SK-N-SH (cell line): ENCODE measurements at regions of chr10 and their contacts with region 1.

Region 1: DNA sequence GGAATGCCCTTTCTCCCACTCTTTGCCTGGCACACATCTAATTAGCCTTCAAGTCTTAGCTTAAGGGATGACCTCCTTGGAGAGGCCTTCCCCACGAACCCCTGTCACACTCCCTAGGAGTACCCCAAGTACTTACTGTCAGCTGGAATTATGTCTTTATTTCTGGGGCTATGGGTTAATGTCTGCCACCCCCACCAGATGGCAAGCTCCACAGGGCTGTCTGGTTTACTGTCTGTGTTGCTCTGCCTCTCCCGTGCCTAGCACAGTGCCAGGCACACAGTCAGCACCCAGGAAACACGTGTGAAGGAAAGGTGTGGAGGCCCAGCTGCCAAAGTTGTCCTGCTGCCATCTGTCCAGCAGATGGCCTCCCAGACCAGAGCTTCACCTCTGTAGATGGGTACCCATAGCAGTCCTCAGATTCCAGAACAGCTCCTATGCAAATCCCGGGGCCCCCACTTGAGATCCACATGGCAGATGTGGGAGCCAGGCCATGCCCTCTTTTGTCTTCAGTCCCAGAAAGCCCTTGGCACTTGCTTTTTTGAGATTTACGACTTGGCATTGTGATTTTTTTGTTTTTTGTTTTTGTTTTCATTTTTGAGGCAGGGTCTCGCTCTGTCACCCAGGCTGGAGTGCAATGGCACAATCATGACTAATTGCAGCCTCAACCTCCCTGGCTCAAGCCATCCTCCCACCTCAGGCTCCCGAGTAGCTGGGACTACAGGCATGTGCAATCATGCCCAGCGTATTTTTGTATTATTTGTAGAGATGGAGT is 17.2 kb upstream of the PALD1 start:
- DNase-seq: peak; percentile 85
- H3K4me3 ChIP-seq: no peak overlapping the region; a peak in 1 of 4 replicates
- H3K27ac ChIP-seq: no peak overlapping the region
- H3K4me1 ChIP-seq: peaks cover 0 to 24% of the 10 kb centered on the region in 2 experiments; a peak in 1 of 4 replicates
- H3K27me3 ChIP-seq: peaks cover 8% of the 10 kb centered on the region; the same call in 1 of the 2 replicates
- CTCF ChIP-seq: peak; percentile 82
- EP300 ChIP-seq: no peak
- RAD21 ChIP-seq: peak; percentile 94

Region 2: DNA sequence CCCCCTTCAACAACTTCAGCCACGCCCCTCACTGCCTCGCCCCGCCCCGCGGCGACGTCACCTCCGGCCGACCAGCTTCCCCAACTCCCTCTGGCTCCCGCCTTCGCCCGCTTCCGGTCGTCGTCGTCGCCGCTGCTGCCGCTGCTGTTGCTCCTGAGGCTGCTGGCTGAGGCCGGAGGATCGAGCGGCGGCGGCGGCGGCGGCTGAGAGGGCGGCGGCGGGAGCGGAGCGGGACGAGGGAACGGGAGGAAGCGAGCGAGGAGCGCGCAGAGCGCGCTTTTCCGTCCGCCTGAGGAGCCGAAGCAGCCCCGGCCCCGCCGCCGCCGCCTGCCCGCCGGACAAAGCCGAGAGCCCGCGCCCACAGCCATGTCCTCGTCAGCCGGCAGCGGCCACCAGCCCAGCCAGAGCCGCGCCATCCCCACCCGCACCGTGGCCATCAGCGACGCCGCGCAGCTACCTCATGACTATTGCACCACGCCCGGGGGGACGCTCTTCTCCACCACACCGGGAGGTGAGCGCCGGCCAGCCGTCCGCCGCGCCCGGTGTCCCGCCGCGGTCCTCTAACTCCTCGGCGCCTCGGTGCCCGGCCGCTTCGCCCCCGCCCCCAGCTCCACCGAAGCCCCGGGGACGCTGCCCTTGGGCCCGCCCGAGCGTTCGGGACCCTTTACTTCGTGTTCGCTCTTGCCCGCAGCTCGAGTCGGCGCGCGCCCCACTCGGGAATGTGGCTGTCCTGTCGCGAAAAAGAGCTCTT is 57.2 kb before region 1 on chr10 and contains the start of gene EIF4EBP2:
- CTCF ChIA-PET with region 1: interaction called, 12 read pairs
- POLR2A ChIA-PET with region 1: no interaction called
- DNase-seq: peak; percentile 96
- H3K4me3 ChIP-seq: peak within 1 kb of the TSS; percentile 91 to 93
- H3K27ac ChIP-seq: peak within 1 kb of the TSS; percentile 74
- H3K4me1 ChIP-seq: peaks cover 10 to 18% of the 10 kb centered on the region in 2 experiments
- H3K27me3 ChIP-seq: no peaks in the 10 kb centered on the region
- CTCF ChIP-seq: no peak
- EP300 ChIP-seq: no peak
- RAD21 ChIP-seq: no peak
- polyA plus RNA-seq, gene EIF4EBP2: 9.9 and 12.7 TPM in 2 replicates

Region 3: DNA sequence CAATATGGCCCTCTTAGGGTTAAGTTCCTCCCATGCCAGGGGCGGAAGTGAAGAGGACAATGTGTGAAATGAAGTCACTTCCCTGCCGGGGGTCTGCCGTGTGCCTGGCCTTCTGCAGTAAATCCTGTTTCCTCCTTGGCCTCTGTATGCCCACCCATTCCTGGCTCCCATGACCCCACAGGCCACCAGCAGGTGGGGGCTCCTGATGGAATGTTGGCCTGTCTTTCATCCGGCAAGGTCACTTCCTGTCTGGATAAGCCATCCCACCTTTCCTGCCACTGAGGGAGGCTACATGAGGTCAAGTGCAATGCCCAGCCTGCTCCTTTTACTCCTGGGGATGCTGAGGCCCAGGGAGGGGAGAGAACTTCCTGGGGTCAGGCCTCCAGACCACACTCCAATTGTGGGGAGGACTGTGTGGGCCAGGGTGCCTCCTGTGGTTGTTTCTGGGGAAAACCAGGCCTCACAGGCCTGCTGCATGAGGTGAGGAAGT is 39.5 kb after region 1 on chr10:
- CTCF ChIA-PET with region 1: interaction called, 11 read pairs
- POLR2A ChIA-PET with region 1: no interaction called
- DNase-seq: no peak
- H3K4me3 ChIP-seq: no peak overlapping the region
- H3K27ac ChIP-seq: no peak overlapping the region
- H3K4me1 ChIP-seq: peaks cover 0 to 14% of the 10 kb centered on the region in 2 experiments; a peak in 1 of 4 replicates
- H3K27me3 ChIP-seq: no peaks in the 10 kb centered on the region
- CTCF ChIP-seq: no peak
- EP300 ChIP-seq: no peak
- RAD21 ChIP-seq: no peak

Region 4: DNA sequence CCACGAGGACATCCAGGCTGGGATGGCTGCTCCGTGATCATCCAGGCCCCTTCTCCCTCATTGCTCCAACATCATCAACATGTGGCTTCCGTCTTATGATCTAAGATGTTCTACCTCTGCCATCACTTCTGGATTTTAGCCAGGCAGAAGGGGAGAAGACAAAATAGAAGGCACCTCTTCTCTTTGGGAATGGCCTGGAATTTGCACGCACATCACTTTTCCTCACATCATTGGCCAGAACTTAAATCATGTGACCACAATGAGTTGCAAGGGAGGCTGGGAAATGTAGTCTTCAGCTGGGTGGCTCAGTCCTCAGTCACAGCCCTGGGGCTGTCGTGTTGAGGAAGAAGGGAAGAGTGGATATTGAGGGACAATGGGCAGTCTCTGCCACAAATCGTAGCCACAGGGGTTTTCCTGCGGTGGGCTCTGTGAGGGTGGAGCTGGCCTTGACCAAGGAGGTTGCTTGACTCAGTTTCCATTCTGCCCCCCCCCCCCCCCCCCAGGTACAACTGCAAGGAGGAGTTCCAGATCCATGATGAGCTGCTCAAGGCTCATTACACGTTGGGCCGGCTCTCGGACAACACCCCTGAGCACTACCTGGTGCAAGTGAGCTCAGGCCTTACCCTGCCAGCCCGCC is 67.4 kb after region 1 on chr10:
- CTCF ChIA-PET with region 1: interaction called, 190 read pairs
- POLR2A ChIA-PET with region 1: no interaction called
- DNase-seq: peak; percentile 79
- H3K4me3 ChIP-seq: no peak overlapping the region
- H3K27ac ChIP-seq: no peak overlapping the region
- H3K4me1 ChIP-seq: peaks cover 0 to 3% of the 10 kb centered on the region in 2 experiments; a peak in 1 of 4 replicates
- H3K27me3 ChIP-seq: no peaks in the 10 kb centered on the region
- CTCF ChIP-seq: no peak
- EP300 ChIP-seq: no peak
- RAD21 ChIP-seq: no peak

Region 5: DNA sequence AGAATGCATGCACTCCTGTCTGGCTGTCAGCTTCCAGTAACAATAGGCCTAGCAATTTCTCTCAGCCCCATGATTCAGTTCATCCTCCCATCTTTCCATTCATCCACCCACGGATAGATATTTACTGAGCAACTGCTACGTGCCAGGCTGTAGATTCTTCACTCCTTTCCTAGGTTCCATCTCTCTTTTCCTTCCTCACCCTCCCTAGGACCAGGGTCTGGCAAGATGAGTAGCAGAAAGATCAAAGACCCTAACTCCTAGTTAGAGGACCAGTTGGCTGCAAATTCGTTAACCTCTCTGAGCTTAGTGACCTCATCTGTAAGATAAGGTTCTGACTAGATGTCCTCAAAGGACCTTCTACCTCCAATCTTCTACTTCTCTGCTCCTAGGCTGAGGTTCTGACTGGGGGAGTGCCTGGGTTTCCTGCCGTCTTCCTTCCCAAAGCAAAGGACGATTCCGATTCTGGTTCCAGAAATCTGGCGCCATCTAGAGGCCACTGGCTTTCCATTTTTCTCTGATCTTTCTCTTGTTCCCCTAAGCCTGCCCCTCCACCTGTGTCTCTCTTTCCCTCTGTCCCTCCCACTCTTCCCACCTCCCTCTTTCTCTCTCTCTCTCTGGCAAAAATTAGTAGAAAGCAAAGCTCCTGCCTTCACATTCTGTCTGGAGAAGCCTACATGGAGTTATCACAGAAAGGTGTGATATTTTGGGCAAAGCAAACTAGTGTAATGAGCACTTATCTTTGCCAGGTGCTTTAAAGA is 297.5 kb after region 1 on chr10:
- CTCF ChIA-PET with region 1: interaction called, 18 read pairs
- POLR2A ChIA-PET with region 1: no interaction called
- DNase-seq: peak; percentile 81
- H3K4me3 ChIP-seq: no peak overlapping the region
- H3K27ac ChIP-seq: peak overlapping the region in 1 of 2 experiments; percentile 25; a peak in 1 of 4 replicates
- H3K4me1 ChIP-seq: peaks cover 0 to 17% of the 10 kb centered on the region in 2 experiments; a peak in 1 of 4 replicates
- H3K27me3 ChIP-seq: no peaks in the 10 kb centered on the region
- CTCF ChIP-seq: peak; percentile 69
- EP300 ChIP-seq: no peak
- RAD21 ChIP-seq: peak; percentile 91